MCF 10A (cell line): ENCODE measurements at regions of chr19 and their contacts with region 1.

Region 1: DNA sequence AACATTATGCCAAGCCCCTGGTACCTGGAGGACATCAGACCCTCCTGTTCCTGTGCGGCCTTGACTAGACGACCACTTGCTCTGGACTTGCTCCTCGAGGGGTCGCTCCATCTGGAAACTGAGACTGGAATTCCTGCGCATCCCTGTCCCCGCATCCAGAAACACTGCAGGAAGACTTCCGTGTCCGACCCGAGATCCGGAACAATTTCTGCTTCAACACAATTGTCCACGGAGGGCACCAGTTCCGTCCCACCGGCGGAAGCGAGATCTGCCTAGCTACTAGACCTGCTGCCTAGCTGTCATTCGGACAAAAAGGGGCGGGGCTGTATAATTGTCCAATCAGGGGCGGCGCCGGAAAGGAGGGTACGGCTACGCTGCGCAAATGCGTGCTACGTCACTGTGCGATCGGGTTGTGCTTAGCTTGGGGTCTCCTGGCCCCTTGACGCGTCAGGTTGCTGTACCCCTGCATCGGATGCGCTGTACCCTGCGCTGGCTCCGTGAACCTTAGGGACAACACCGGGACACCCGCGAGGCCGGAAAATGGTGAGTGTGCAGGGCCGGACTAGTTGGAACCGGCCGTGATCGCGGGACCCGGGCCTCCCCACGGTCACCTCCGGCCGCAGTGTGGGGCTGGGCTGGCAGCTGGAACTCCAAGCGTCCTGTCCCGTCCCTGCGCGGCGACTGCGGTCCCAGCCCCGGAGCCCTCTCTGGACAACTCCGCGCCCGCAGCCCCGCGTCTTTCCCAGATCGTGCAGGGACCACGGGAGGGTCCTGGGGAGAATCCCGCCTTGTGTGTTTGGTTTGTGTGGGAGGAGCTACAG is at the starts of genes ZNF490 and ZNF791:
- DNase-seq: peak; percentile 99
- H3K4me3 Mint-ChIP-seq: peak within 1 kb of the TSS; percentile 96
- H3K27ac Mint-ChIP-seq: peak within 1 kb of the TSS; percentile 97
- H3K4me1 Mint-ChIP-seq: no peaks in the 10 kb centered on the region
- H3K27me3 Mint-ChIP-seq: no peaks in the 10 kb centered on the region
- CTCF ChIP-seq: no peak
- total RNA-seq, gene ZNF490: 6.9 and 8.4 TPM in 2 replicates
- total RNA-seq, gene ZNF791: 23.7 and 40.2 TPM in 2 replicates

Region 2: DNA sequence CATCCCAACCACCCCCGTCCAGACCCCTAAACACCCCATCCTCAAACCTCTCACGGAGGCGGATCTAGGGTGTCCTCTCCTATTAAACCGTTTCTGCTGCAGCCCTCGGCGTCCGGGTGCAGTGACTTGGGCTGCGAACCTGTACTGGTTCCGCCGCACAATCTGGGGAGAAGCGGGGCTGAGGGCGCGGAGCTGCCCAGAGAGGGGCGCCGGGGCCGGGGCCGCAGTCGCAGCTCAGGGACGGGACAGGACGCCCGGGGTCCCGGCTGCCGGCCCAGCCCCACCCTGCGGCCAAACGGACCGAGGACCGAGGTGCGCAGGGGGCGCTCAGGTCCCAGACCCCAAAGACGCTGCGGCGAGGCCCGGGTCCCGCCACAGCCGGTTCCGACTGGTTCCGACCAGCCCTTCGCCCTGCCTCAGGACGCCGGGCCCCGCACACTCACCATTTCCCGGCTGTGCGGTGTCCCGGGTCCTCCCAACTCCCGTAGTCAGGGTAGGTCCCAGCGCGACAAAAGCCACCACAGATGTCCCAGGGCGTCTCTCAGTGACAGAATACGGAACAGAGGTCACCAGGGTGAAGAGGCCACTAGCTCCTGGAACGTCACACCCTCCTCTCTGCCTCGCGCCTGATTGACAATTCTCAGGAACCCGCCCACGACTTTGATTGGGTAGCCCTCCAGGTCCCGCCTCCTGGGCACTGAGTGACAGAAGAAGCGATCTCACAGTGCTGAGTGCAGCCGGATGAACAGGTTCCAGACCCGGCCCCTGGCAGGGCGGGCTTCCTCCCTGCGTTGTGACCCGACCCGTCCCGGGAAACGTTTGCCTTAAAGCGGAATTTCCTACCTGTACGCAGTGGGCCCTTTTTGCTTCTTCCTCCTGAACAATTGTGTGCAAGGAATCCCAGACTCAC is 316.2 kb before region 1 on chr19 and contains the start of gene ZNF44:
- CTCF ChIA-PET with region 1: no interaction called
- POLR2A ChIA-PET with region 1: interaction called, 13 read pairs
- intact Hi-C with region 1: loop called (anchors 5 kb)
- DNase-seq: peak; percentile 99
- H3K4me3 Mint-ChIP-seq: peak within 1 kb of the TSS; percentile 94
- H3K27ac Mint-ChIP-seq: peak within 1 kb of the TSS; percentile 92
- H3K4me1 Mint-ChIP-seq: peaks cover 1% of the 10 kb centered on the region
- H3K27me3 Mint-ChIP-seq: no peaks in the 10 kb centered on the region
- CTCF ChIP-seq: no peak
- total RNA-seq, gene ZNF44: 10.3 and 10.5 TPM in 2 replicates

Region 3: DNA sequence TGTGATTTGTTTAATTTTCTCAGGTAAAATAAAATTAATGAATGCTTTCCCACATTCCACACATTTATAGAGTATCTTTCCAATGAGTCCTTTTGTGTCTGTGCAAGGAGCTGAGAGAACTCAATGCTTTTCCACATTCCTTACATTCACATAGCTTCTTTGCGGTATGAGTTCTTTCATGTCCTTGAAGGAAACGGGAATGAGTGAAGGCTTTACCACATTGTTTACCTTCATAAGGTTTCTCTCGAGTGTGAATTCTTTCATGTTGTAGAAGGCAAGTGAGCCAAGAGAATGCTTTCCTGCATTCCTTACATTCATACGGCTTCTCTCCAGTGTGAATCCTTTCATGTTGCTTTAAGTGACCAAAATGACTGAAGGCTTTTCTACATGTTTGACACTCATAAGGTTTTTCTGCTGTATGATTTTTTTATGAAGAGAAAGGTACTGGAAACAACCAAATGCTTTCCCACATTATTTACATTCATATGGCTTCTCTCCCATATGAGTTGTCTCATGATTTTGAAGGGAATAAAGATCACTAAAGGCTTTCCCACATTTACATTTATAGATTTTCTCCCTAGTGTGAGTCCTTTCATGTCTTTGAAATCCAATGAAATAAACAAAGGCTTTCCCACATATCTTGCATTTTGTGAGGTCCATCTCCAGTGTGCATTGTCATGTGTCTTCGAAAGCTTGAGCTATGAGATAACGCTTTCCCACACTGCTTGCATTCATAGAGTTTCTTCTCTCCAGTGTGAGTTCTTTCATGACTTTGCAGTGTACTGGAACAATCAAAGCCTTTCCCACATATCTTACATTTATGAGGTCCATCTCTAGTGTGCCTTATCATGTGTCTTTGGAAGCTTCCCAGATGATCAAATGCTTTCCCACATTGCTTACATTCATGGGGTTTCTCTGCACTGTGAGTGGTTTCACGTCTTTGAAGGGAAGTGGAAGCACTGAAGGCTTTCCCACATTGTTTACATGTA is 230.7 kb before region 1 on chr19:
- CTCF ChIA-PET with region 1: no interaction called
- POLR2A ChIA-PET with region 1: no interaction called
- intact Hi-C with region 1: no loop called
- DNase-seq: no peak
- H3K4me3 Mint-ChIP-seq: no peak overlapping the region
- H3K27ac Mint-ChIP-seq: no peak overlapping the region
- H3K4me1 Mint-ChIP-seq: no peaks in the 10 kb centered on the region
- H3K27me3 Mint-ChIP-seq: no peaks in the 10 kb centered on the region
- CTCF ChIP-seq: no peak

Region 4: DNA sequence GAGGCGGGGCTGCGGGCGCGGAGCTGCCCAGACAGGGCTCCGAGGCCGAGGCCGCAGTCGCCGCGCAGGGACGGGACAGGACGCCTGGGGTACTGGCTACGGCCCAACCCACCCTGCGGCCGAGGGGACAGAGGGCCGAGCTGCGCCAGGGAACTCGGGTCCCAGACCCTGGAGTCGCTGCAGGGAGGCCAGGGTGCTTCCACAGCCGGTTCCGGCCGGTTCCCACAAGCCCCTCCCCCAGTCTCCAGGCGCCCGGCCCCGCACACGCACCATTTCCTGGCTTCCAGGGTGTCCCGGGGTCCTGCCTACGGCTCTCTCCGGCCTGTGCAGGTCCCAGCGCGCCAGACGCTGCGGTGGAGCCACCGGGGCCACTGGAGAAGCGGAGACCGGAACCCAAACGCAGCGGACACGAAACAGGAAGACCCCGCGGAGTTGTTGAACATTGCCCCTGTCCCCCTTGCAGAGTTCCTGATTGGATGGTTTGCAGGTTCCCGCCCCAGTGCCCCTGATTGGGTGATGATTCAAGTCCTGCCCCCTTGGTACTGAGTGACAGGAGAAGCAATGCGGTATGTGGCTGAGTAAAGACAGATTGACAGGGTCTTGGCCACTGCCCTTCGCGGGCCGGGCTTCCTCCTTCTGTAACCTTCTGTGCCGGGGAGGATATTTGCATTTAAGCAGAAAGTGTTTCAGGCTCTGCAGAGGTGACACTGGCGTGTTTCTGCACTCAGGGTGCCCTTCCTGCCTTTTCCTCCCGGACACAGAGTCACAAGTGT is 59.5 kb before region 1 on chr19 and contains the start of gene ZNF564:
- CTCF ChIA-PET with region 1: no interaction called
- POLR2A ChIA-PET with region 1: interaction called, 51 read pairs
- intact Hi-C with region 1: loop called (anchors 1 kb)
- DNase-seq: peak; percentile 99
- H3K4me3 Mint-ChIP-seq: peak within 1 kb of the TSS; percentile 90
- H3K27ac Mint-ChIP-seq: peak within 1 kb of the TSS; percentile 90
- H3K4me1 Mint-ChIP-seq: peaks cover 6% of the 10 kb centered on the region
- H3K27me3 Mint-ChIP-seq: no peaks in the 10 kb centered on the region
- CTCF ChIP-seq: no peak
- total RNA-seq, gene ZNF564: 4.4 and 5.1 TPM in 2 replicates

Region 5: GRCh38 chr19:12628040-12629022 is 17.6 kb after region 1 on chr19:
- CTCF ChIA-PET with region 1: no interaction called
- POLR2A ChIA-PET with region 1: interaction called, 11 read pairs
- intact Hi-C with region 1: no loop called
- DNase-seq: peak; percentile 17
- H3K4me3 Mint-ChIP-seq: no peak overlapping the region
- H3K27ac Mint-ChIP-seq: no peak overlapping the region
- H3K4me1 Mint-ChIP-seq: no peaks in the 10 kb centered on the region
- H3K27me3 Mint-ChIP-seq: no peaks in the 10 kb centered on the region
- CTCF ChIP-seq: no peak

Region 6: DNA sequence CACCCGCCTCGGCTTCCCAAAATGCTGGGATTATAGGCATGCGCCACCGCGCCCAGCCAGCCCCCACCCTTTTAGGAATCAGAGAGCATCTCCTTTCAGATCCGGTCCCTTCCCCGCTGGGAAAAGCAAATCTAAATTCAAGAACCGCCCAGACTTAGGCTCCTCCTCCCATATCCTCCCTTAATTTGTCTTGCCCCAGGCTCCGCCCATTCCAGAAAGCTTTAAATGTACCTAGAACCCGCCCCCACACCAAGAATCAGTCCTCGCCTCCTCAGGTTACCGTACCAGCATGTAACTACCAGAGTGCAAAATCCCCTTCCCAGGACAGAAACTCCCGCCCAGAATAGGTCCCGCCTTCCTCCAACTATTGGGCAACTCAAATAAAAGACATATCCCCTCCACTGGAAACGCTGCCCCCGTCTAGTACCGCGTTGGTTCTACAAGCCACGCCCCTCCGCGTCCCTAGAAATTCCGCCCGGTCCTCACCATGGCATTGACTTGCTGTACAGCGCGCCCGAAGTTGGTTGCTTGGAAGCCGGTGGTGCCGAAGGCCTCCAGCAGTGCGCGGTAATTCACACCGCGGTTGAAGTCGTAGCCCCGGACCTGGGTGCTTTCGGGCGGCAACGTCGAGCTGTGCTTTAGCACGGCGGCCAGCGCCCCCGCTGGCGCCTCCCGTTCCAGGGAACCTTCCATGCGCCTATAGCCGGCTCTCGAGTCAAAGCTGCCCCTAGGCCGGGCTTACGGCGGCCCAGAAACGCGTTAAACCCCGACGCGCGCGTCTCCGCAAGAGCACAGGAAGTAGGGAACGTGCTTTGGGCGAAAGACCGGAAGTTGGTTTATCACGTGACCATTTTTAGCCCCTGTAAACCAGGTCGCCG is 70.6 kb after region 1 on chr19 and contains the start of gene DHPS:
- CTCF ChIA-PET with region 1: interaction called, 3 read pairs
- POLR2A ChIA-PET with region 1: interaction called, 11 read pairs
- intact Hi-C with region 1: no loop called
- DNase-seq: peak; percentile 100
- H3K4me3 Mint-ChIP-seq: peak within 1 kb of the TSS; percentile 96
- H3K27ac Mint-ChIP-seq: peak within 1 kb of the TSS; percentile 97
- H3K4me1 Mint-ChIP-seq: peaks cover 5% of the 10 kb centered on the region
- H3K27me3 Mint-ChIP-seq: no peaks in the 10 kb centered on the region
- CTCF ChIP-seq: no peak
- total RNA-seq, gene DHPS: 74.2 and 85.8 TPM in 2 replicates